ENCODE measurements at regions of chr6 and their contacts with region 1.

Region 1: DNA sequence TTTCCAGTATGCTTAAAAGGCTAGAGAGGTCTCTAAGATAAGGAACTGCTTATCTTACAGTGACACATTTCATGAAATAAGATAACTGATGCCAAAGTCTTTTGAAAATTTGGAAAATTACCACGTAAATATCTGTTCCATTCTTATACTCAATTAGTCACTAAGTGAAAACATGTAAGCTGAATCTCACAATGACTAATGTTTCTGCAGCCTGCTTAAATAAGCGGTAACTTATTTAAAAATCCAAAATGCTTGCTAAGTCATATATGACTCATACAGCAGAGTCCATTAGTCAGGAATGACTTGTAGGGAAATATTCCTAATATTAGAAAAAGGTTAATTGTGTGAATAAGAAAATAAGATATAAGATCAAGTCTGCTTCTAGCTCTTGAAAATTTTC is 27.8 kb upstream of the LGSN start:
- DNase-seq: no peak
- H3K4me3 ChIP-seq: no peak overlapping the region
- H3K27ac ChIP-seq: no peak overlapping the region
- H3K4me1 ChIP-seq: peaks cover 4 to 11% of the 10 kb centered on the region in 2 donors
- H3K27me3 ChIP-seq: no peaks in the 10 kb centered on the region
- CTCF ChIP-seq: no peak
- POLR2A ChIP-seq: no peak

Region 2: DNA sequence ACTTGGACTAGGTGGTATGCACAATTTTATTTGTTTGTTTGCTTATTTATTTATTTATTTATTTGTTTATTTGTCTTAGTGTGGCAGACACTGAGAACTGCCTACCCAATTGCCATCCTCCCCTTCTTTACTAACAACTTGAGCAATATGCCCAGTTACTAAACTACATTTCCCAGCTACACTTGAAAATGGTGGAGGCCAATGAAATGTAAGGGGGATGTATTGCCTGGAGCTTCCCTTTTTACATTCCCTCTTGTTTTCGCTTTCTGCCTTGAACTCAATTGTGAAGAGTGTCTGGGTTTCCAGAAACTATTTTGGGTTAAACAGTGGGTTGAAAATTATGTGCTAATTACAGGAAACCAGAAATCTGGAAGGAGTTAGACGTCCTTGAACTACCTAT is 289.0 kb before region 1 on chr6:
- intact Hi-C with region 1: no loop called
- DNase-seq: no peak
- H3K4me3 ChIP-seq: no peak overlapping the region
- H3K27ac ChIP-seq: no peak overlapping the region
- H3K4me1 ChIP-seq: no peaks in the 10 kb centered on the region
- H3K27me3 ChIP-seq: no peaks in the 10 kb centered on the region
- CTCF ChIP-seq: no peak
- POLR2A ChIP-seq: no peak

Region 3: GRCh38 chr6:63176181-63176580 is 171.4 kb before region 1 on chr6:
- intact Hi-C with region 1: no loop called
- DNase-seq: no peak
- H3K4me3 ChIP-seq: no peak overlapping the region
- H3K27ac ChIP-seq: no peak overlapping the region
- H3K4me1 ChIP-seq: no peaks in the 10 kb centered on the region
- H3K27me3 ChIP-seq: no peaks in the 10 kb centered on the region
- CTCF ChIP-seq: no peak
- POLR2A ChIP-seq: no peak

Region 4: GRCh38 chr6:63764318-63764916 is 416.8 kb after region 1 on chr6:
- intact Hi-C with region 1: loop called (anchors 10 kb)
- DNase-seq: no peak
- H3K4me3 ChIP-seq: no peak overlapping the region
- H3K27ac ChIP-seq: no peak overlapping the region
- H3K4me1 ChIP-seq: no peaks in the 10 kb centered on the region
- H3K27me3 ChIP-seq: no peaks in the 10 kb centered on the region
- CTCF ChIP-seq: peak; percentile 48 to 81 (median 70)
- POLR2A ChIP-seq: no peak

Region 5: GRCh38 chr6:63790334-63790733 is 442.7 kb after region 1 on chr6:
- intact Hi-C with region 1: loop called in 1 of 2 experiments (anchors 10 kb)
- DNase-seq: no peak
- H3K4me3 ChIP-seq: no peak overlapping the region
- H3K27ac ChIP-seq: no peak overlapping the region
- H3K4me1 ChIP-seq: no peaks in the 10 kb centered on the region
- H3K27me3 ChIP-seq: peaks cover 5% of the 10 kb centered on the region
- CTCF ChIP-seq: no peak
- POLR2A ChIP-seq: no peak

Region 6: DNA sequence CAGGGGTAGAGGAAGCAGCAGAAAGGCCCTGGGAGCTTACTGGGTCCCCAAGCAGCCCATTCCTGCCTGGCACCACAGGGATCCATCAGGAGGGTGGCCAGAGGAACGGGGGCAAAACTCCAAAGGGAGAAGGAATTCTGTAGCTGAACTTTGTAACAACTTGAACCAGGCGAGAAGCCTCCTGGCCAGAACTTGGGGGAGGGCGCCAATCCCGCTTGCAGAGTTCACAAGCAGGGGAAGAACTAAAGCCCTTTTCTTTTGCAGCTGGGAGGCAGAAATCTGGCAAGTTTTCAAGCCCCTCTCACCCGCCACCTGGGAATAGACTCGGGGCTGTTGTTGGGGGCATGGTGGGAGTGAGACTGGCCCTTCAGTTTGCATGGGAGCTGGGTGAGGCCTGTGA is 477.1 kb after region 1 on chr6:
- intact Hi-C with region 1: no loop called
- DNase-seq: no peak
- H3K4me3 ChIP-seq: no peak overlapping the region
- H3K27ac ChIP-seq: no peak overlapping the region
- H3K4me1 ChIP-seq: no peaks in the 10 kb centered on the region
- H3K27me3 ChIP-seq: no peaks in the 10 kb centered on the region
- CTCF ChIP-seq: no peak
- POLR2A ChIP-seq: no peak

Measured in adrenal gland (tissue), 19 donors.